Panc1 (cell line): ENCODE measurements at regions of chr7 and their contacts with region 1.

Region 1: DNA sequence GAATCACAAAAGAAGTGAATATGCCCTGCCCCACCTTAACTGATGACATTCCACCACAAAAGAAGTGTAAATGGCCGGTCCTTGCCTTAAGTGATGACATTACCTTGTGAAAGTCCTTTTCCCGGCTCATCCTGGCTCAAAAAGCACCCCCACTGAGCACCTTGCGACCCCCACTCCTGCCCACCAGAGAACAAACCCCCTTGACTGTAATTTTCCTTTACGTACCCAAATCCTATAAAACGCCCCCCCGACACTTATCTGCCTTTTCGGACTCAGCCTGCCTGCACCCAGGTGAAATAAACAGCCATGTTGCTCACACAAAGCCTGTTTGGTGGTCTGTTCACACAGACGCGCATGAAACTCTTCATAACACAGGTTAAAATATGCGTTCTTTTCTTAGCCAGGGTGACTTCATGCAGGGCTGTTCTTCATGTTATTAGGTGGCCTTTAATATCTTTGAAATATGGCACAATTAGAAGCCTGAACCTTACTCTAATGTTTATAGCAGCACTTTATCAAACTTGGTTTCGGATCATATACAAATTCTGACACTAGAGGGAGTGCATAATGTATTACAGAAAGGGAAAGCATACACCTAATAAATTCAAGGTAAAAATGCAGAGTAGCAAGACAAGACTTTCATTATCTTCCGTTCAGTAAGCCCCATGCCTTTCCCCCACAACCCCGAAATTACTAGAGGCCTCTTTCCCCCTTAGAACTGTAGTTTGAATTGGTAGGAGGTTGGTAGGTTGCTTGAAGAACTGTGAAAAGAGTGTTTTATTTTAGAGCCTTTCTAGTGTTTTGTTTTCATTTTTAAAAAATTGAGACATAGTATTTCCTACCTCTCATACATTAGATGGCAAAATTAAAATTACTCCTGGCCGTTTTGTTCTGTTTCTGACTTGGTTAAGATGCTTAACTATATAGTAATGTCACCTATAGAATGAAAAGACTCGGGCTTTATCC is 117.9 kb downstream of the NPY start:
- DNase-seq: peak; percentile 33
- ATAC-seq: peak; percentile 79
- H3K4me3 ChIP-seq: 0 out of 4 replicates have a peak overlapping the region, but pooled peaks of 1 of the 2 experiments have one; percentile 7
- H3K27ac ChIP-seq: no peak overlapping the region
- H3K4me1 ChIP-seq: no peaks in the 10 kb centered on the region
- H3K27me3 ChIP-seq: peaks cover 4% of the 10 kb centered on the region; the same call in 1 of the 2 replicates
- CTCF ChIP-seq: peak; percentile 74

Region 2: GRCh38 chr7:24572997-24573625 is 171.2 kb after region 1 on chr7 and contains the start of gene PALS2:
- CTCF ChIA-PET with region 1: no interaction called
- POLR2A ChIA-PET with region 1: no interaction called
- in situ Hi-C with region 1: no loop called
- intact Hi-C with region 1: loop called (anchors 10 kb)
- DNase-seq: no peak
- ATAC-seq: peak; percentile 82
- H3K4me3 ChIP-seq: peak within 1 kb of the TSS; percentile 65 to 90
- H3K27ac ChIP-seq: peak within 1 kb of the TSS; percentile 83
- H3K4me1 ChIP-seq: peaks cover 16% of the 10 kb centered on the region
- H3K27me3 ChIP-seq: peaks cover 28% of the 10 kb centered on the region
- CTCF ChIP-seq: no peak
- total RNA-seq, gene PALS2: 48.2 TPM